Ascending aorta (tissue), 2 donors: ENCODE measurements at regions of chr2 and their contacts with region 1.

Region 1: DNA sequence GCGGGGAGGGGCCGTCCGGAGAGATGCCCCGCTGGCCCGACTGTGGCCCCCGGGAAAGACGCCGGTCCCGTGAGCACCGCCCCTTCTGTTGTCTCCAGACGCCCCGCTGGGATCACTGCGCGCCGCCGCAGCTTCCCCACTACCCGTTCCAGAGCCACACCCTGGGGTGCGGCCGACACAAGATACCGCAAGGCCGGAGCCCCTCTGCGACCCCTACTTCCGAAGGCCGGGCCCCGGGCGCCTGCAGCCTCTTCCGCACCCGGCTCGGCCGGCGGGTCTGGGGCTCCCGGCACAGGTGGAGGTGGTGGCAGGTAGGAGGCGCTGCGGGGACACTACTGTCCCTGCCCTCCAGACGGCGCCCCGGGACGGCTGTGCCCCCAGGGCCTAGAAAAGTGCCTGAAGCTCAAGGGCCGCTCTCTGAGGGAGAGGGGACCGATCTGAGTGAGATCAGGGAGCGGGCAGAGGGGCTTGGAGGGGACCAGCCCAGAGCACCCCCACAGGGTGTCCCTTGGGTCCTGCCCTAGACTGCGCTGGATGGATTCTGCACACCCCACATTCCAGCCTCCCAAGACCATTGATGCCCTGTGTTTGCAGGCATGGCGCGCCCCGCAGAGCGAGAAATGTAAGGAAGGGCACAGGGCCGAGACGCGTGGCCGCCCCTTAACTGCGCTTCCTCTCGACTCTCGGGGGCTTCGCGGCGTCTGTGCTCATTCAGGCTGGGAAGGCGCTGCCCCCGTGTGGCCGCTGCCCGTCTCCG is 80.0 kb downstream of the GFPT1 start:
- DNase-seq: peak; percentile 33 to 92
- H3K4me3 ChIP-seq: peak overlapping the region; percentile 64 to 75
- H3K27ac ChIP-seq: peak overlapping the region; percentile 81 to 82
- H3K4me1 ChIP-seq: peaks cover 4 to 42% of the 10 kb centered on the region in 2 donors
- H3K27me3 ChIP-seq: no peaks in the 10 kb centered on the region
- CTCF ChIP-seq: peak; percentile 78 to 89 (median 86)

Region 2: GRCh38 chr2:69077252-69077953 is 229.6 kb before region 1 on chr2:
- intact Hi-C with region 1: loop called (anchors 5 kb)
- DNase-seq: no peak
- H3K4me3 ChIP-seq: no peak overlapping the region
- H3K27ac ChIP-seq: peak overlapping the region; percentile 92
- H3K4me1 ChIP-seq: peaks cover 6 to 42% of the 10 kb centered on the region in 2 donors
- H3K27me3 ChIP-seq: no peaks in the 10 kb centered on the region
- CTCF ChIP-seq: no peak

Region 3: DNA sequence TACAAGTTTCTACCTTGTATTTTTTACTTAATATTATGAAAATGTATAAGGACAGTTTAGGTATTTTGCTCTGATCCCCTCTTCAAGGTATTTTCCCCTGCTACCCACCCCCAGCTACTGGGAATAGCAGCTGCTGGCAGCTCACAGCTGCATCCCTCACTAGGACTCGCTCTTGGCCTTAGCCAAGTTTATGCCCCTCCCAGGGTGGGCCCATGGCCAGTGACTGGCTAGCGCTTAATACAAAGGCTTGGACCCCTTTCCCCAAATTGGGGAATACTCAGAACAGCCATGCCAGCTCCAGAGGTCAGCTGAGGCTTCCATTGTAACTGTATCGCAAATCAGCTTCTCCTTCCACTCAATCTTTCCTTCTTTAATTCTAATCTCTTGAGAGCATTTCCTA is 51.2 kb before region 1 on chr2:
- intact Hi-C with region 1: loop called (anchors 2 kb)
- DNase-seq: no peak
- H3K4me3 ChIP-seq: no peak overlapping the region
- H3K27ac ChIP-seq: peak overlapping the region in 1 of 2 donors; percentile 31
- H3K4me1 ChIP-seq: peaks cover 4 to 19% of the 10 kb centered on the region in 2 donors
- H3K27me3 ChIP-seq: no peaks in the 10 kb centered on the region
- CTCF ChIP-seq: no peak

Region 4: GRCh38 chr2:69272803-69273471 is 34.1 kb before region 1 on chr2:
- intact Hi-C with region 1: no loop called
- DNase-seq: no peak
- H3K4me3 ChIP-seq: no peak overlapping the region
- H3K27ac ChIP-seq: peak overlapping the region in 1 of 2 donors; percentile 9
- H3K4me1 ChIP-seq: peaks cover 3 to 19% of the 10 kb centered on the region in 2 donors
- H3K27me3 ChIP-seq: no peaks in the 10 kb centered on the region
- CTCF ChIP-seq: no peak